Left cardiac atrium (tissue), 4 donors: ENCODE measurements at regions of chrX and their contacts with region 1.

Region 1: GRCh38 chrX:50747471-50747900 is 66.5 kb downstream of the SHROOM4 start:
- DNase-seq: no peak
- ATAC-seq: no peak

Region 2: GRCh38 chrX:50536955-50537354 is 210.5 kb before region 1 on chrX:
- intact Hi-C with region 1: no loop called
- DNase-seq: no peak
- ATAC-seq: no peak

Region 3: DNA sequence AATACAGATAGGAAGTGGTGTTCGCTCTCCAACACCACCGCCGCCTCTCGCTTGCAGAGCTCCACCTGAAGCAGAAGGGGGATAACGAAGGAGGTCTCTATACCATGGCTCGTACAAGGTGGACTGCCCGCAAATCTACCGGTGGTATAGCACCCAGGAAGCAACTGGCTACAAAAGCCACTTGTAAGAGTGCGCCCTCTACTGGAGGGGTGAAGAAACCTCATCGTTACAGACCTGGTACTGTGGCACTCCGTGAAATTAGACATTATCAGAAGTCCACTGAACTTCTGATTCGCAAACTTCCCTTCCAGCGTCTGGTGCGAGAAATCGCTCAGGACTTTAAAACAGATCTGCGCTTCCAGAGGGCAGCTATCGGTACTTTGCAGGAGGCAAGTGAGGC is 157.8 kb after region 1 on chrX:
- intact Hi-C with region 1: loop called (anchors 2 to 10 kb)
- DNase-seq: no peak
- ATAC-seq: no peak

Region 4: DNA sequence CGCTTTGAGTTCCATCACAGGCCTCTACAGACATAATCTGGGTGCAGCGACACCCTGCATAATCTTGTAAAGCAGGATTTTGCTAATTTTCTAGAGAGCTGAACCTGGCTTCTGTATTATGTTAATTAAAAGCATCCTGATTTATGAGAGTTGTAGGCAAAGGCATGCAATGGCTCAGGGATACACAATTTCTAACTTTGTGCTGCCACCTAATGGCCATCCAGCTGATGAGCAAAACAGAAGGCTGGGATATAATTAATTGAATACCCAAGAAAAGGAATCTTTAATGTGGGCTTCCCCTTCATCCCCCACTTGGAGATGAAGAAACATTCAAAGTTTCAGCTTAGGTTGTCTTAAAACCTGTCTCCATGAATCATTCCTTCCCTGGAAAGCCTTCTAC is 241.2 kb after region 1 on chrX:
- intact Hi-C with region 1: loop called in 1 of 2 experiments (anchors 10 kb)
- DNase-seq: no peak
- ATAC-seq: no peak